OCI-LY7 (cell line): ENCODE measurements at regions of chr2 and their contacts with region 1.

Region 1: DNA sequence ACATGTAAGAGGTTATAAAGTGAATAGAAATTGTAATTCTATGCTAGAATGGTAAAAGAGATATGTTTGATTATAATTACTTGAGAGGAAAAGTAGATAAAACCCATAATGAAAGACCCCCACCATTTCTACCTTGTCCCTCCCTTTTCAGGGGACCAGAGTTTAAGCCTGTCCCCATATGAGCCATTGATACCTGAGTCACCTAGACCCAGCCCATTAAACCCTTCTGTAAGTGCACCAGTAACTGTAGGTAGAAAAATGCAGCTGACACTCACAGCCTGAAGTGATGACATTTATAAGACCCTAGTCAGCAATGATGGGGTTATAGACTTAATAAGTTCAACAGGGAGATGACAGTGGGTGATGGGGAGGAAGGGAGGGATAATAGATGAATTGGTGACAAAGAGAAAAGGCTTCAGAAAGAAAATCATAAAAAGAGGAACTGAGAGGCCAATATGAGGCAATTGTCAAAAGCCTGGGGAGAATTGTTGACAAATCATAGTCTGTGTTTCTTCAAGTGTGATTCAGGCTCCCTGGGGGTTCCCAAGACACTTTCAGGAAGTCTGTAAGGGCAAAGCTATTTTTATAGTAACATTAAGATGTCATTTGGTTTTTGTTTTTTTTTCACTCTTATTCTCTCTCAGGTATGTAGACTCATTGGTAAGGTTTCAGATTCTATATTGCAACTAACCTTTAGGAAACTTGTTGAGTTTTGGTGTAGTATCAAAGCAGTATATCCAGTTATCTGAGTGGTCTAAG is 544.2 kb downstream of the SATB2 start:
- DNase-seq: peak; percentile 95
- H3K4me3 ChIP-seq: peak overlapping the region; percentile 54
- H3K27ac ChIP-seq: peak overlapping the region; percentile 88
- H3K4me1 ChIP-seq: peaks cover 60% of the 10 kb centered on the region
- CTCF ChIP-seq: no peak

Region 2: DNA sequence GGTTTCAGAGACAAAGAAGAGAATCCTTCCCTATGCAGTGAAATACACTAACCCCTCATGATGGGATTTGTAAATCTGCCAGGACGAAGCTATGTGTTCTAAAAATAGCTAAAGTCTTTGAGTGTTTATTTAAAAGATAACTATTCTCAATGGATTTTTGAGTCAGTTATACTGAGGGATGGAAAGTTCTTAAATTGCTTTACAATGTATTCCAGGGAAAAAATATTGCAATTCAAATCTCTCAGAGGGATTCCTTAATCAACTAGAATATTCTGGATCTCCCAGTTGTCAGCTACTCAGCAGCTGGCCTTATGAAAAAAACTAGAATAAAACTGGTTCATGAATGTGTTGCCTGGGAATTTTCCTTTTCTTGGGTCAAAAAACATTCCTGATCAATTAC is 796.8 kb before region 1 on chr2:
- CTCF ChIA-PET with region 1: no interaction called
- POLR2A ChIA-PET with region 1: no interaction called
- intact Hi-C with region 1: no loop called
- DNase-seq: no peak
- H3K4me3 ChIP-seq: no peak overlapping the region
- H3K27ac ChIP-seq: no peak overlapping the region
- H3K4me1 ChIP-seq: no peaks in the 10 kb centered on the region
- CTCF ChIP-seq: no peak

Region 3: GRCh38 chr2:198452327-198452726 is 461.2 kb before region 1 on chr2:
- CTCF ChIA-PET with region 1: no interaction called
- POLR2A ChIA-PET with region 1: no interaction called
- intact Hi-C with region 1: no loop called
- DNase-seq: peak; percentile 58
- H3K4me3 ChIP-seq: no peak overlapping the region
- H3K27ac ChIP-seq: no peak overlapping the region
- H3K4me1 ChIP-seq: peaks cover 24% of the 10 kb centered on the region
- CTCF ChIP-seq: no peak

Region 4: GRCh38 chr2:199459286-199460016 is 545.9 kb after region 1 on chr2:
- CTCF ChIA-PET with region 1: no interaction called
- POLR2A ChIA-PET with region 1: interaction called, 3 read pairs
- intact Hi-C with region 1: loop called (anchors 5 kb)
- DNase-seq: peak; percentile 81
- H3K4me3 ChIP-seq: peak overlapping the region; percentile 86
- H3K27ac ChIP-seq: peak overlapping the region; percentile 79
- H3K4me1 ChIP-seq: peaks cover 34% of the 10 kb centered on the region
- CTCF ChIP-seq: peak; percentile 42; the same call in 1 of the 2 replicates